Posterior cingulate gyrus (tissue), 11 donors: ENCODE measurements at regions of chr16 and their contacts with region 1.

Region 1: DNA sequence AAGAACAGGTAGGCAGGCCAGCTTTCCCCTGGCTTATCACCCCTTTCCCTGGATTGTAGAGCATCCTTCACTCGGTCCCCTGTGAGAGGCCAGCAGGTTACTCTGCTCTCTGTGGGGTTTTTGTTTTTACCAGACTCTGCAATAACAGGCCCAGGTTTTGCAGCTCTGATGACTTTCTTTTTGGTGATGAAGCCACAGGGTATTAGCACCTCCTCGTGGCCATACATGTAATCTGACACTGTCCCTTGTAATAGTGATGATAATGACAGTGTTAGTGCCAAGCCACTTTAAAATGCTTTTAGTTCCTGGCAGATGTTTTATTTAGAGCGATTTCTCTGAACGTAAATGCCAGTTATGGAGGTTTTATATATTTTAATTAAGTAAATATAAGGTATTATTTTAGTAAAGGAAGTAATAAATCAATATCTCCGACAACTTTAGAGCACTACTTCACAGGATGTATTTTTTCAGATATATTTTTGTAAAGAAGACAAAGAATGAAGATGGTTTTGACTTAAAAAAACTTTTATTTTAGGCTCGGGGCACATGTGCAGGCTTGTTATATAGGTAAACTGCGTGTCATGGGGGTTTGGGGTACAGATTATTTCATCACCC is 38.0 kb upstream of the CPHXL start:
- DNase-seq: peak in 5 of 10 donors; percentile 51 to 88 (median 60)

Region 2: GRCh38 chr16:75198135-75198600 is 566.1 kb before region 1 on chr16:
- intact Hi-C with region 1: loop called (anchors 10 kb)
- DNase-seq: peak in 2 of 10 donors; percentile 39 to 59

Region 3: GRCh38 chr16:75471723-75472633 is 292.3 kb before region 1 on chr16:
- intact Hi-C with region 1: loop called (anchors 5 kb)
- DNase-seq: peak in 7 of 10 donors; percentile 50 to 89 (median 64)

Region 4: DNA sequence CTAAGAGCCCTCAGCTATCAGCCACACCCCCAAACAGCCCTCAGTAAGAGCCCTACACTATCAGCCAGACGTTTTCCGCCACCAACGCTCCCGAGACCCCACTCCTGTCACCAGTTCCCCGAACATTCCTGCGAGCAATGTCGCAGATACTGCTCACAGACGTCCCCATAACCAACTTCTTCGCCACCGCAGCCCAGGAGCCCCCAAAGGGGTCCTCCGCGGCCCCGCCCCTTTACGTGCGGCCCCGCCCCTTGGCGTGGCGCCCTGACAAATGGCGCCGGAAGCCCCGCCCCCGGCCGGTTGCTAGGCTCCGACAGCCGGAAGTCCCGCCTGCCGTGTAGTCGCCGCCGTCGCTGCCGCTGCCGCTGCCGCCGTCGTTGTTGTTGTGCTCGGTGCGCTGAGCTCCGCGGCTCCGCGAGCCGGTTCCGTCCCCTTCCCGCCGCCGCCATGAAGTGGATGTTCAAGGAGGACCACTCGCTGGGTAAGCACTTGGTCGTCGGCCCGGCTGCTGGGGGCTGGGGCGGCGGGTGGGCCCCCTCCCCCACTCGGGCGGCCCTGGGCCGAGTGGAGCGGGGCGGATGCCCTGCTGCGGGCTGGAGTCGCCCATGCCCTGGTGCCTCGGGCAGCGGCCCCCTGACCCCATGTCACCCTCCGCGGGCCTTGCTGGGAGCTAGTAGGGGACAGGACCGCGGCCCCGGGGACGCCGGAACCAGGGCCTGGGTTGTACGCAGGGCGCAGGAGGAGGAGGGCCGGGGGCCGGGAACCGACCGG is 198.0 kb before region 1 on chr16 and contains the start of gene GABARAPL2:
- intact Hi-C with region 1: loop called (anchors 5 kb)
- DNase-seq: peak; percentile 75 to 98 (median 85)

Region 5: DNA sequence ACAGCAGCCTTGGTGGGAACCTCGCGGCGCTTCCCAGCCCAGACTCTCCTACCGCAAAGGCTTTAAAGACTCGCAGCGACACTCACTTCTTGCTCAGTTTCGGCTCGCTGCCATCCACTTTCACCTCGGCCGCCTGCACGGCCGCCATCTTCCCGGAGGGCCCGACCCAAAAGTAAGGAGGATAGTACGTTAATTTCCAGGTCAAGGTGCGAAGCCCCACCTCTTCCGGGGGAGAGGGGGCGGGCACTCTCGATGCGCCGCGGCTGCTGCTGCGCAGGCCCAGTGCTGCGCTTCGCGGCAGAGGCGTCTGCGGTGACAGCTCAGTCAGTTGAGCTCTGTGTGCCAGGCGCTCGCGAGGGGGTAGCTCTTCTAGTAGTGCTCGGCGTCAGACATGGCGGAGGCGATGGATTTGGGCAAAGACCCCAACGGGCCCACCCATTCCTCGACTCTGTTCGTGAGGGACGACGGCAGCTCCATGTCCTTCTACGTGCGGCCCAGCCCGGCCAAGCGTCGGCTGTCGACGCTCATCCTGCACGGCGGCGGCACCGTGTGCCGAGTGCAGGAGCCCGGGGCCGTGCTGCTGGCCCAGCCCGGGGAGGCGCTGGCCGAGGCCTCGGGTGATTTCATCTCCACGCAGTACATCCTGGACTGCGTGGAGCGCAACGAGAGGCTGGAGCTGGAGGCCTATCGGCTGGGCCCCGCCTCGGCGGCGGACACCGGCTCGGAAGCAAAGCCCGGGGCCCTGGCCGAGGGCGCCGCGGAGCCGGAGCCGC is 116.6 kb before region 1 on chr16 and contains the starts of genes KARS1 and TERF2IP:
- intact Hi-C with region 1: loop called (anchors 2 kb)
- DNase-seq: peak; percentile 92 to 99 (median 94)